Left cardiac atrium (tissue), 4 donors: ENCODE measurements at regions of chr13 and their contacts with region 1.

Region 1: GRCh38 chr13:51797664-51798488 is 6.1 kb downstream of the DHRS12 start:
- DNase-seq: peak; percentile 46
- ATAC-seq: peak in 1 of 2 donors; percentile 13

Region 2: GRCh38 chr13:51125498-51126226 is 672.2 kb before region 1 on chr13:
- intact Hi-C with region 1: loop called in 1 of 2 experiments (anchors 10 kb)
- DNase-seq: peak; percentile 43
- ATAC-seq: peak; percentile 67 to 75

Region 3: DNA sequence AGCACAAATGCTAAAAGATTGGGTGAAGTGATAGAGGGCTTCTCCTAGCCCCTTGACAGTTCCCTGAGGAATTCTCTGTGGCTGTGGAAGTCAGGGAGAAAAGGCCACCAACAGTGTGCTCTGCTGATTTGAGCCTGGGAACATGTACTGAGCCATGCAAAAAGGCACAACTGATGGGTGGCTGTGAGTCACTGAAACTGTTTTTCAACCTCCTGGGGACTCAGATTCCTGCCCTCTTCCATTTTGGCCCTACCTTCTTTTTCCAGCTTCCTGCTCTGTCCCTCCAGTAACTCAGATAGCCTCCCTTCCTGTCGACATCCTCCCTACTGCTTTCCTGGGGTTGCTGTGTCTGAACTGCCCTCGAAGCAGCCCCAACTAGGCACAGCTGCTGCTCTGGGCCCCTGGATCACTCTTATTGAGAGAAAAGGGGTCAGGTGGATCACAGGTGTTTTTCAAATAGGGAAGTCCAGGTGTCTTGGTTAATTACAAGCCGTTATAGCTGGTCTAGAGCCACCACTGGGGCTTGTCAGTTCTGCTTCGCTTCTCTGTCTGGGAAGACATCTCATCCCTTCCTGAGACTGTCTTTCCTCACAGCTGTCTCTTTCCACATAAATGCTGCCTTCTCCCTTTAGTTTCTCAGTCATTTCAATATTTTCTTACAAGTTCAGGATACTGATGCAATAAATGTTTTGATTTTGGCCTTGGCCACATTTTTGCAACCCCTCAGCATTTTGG is 562.0 kb before region 1 on chr13:
- intact Hi-C with region 1: loop called in 1 of 2 experiments (anchors 5 kb)
- DNase-seq: no peak
- ATAC-seq: peak in 1 of 2 donors; percentile 42

Region 4: GRCh38 chr13:51435002-51435578 is 362.8 kb before region 1 on chr13:
- intact Hi-C with region 1: loop called in 1 of 2 experiments (anchors 5 kb)
- DNase-seq: no peak
- ATAC-seq: no peak

Region 5: DNA sequence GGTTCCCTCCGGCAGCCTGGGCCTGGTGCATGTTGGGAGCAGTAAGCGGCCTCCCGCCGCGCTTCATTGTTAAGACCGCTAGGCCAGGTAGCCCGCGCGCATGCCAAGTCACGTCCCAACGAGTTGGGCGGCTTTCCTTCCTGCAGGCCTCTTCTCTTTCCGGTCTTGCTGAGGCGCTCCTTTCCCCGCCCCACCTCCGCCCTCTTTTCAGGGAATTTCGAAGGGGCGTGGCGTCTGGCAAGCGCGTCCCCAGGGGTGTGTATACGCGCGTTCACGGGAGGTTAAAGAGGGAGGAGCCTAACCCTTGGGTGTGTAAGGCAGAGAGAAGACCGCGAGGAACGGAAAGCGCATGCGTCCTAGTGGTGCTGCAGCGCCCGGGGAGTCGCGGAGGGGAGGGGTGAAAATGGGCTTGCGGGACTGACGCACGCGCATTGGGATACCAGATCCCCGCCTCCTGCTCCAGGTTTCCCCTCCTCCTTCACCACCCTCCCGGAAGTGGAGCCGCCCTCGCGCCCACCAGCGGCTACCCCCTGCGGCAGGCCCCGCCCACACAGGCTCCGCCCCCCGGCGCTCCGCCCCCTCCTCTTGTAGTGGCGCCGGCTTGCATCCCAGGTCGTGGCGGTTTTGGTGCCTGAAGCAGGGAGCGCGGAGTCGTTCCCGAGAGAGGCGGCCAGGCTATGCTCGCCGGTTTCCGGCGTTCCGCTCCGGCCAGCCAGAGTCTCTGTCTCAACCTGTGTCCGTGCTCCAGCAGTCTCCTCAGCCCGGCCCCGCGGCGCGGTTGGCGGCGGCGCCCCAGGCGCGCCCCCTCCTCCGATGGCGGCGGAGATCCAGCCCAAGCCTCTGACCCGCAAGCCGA is 213.8 kb before region 1 on chr13 and contains the start of gene WDFY2:
- intact Hi-C with region 1: loop called in 1 of 2 experiments (anchors 5 kb)
- DNase-seq: peak; percentile 99
- ATAC-seq: peak; percentile 95 to 96
- total RNA-seq, gene WDFY2: 5.4 to 7.2 TPM